Left ventricle myocardium superior (tissue), 1 donor: ENCODE measurements at regions of chr12 and their contacts with region 1.

Region 1: GRCh38 chr12:22443379-22444316 is 100.7 kb downstream of the C2CD5 start:
- DNase-seq: peak; percentile 31
- ATAC-seq: peak; percentile 98

Region 2: DNA sequence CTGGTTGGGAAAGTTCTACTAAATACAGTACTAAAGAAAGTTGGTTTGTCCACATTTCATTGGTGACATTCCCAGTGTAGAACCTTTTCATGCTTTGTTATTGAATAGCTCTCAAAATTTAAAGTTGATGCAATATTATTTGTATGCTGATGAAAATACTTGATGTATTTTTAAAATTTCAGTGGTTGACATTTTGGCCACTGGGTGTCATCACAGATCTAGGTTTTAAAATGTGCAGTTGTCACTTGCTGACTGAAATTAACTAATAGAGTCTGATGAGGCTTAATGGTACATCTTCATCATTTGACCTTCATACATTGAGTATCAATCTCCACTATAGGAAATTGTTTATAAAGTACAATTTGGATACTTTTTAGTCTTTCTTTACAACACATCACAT is 360.5 kb before region 1 on chr12:
- intact Hi-C with region 1: loop called (anchors 5 kb)
- DNase-seq: no peak
- ATAC-seq: peak; percentile 42

Region 3: DNA sequence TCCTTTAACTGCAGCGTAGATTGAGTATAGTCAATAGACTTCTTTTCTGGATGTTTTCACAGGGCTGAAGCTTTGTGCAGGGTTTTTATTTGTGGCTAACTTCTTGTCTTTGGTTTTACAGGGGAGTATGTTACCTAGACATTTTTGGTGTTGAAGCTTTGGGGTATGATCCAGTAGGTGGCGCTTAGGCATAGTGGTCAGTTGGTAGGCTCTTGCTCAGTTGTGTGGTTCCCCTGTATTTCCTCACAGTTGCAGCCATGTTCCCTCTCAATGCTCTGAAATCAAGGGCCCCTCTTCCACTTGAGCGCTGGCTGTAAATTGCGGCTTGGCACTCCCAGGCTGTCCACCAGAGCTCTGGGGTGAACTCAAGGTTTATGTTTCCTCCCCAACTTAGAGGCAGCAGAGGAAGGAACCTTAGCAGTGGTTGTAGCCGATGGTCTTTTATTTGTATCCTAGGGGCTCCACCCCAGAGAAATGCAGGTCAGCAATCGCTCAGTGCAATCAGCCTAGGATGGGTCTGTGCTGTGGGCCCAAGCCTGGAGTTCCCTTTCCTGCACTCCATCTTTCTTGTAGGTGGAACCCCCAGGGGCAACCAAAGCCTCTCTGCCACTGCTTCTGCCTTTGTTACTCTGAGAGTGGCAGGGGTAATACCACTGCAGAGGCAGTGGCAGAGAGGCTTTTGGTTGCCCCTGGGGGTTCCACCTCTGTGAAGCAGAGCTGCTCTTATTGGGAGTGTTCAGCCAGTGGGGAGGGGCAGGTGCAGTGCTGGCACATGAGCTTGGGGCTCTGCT is 342.5 kb before region 1 on chr12:
- intact Hi-C with region 1: loop called (anchors 5 kb)
- DNase-seq: no peak
- ATAC-seq: peak; percentile 79

Region 4: GRCh38 chr12:22164139-22164538 is 279.5 kb before region 1 on chr12:
- intact Hi-C with region 1: no loop called
- DNase-seq: no peak
- ATAC-seq: no peak